Breast epithelium (tissue), 4 donors: ENCODE measurements at regions of chr18 and their contacts with region 1.

Region 1: GRCh38 chr18:64490207-64490606 is 341.3 kb upstream of the LINC00305 start:
- DNase-seq: no peak
- H3K4me3 ChIP-seq: no peak overlapping the region
- H3K27ac ChIP-seq: no peak overlapping the region
- H3K4me1 ChIP-seq: no peaks in the 10 kb centered on the region
- H3K27me3 ChIP-seq: no peaks in the 10 kb centered on the region
- CTCF ChIP-seq: no peak
- POLR2A ChIP-seq: no peak

Region 2: GRCh38 chr18:63299837-63300745 is 1190.1 kb before region 1 on chr18:
- intact Hi-C with region 1: no loop called
- DNase-seq: no peak
- H3K4me3 ChIP-seq: no peak overlapping the region
- H3K27ac ChIP-seq: peak overlapping the region; percentile 42 to 46
- H3K4me1 ChIP-seq: peaks cover 4 to 12% of the 10 kb centered on the region in 2 donors
- H3K27me3 ChIP-seq: no peaks in the 10 kb centered on the region
- CTCF ChIP-seq: no peak
- POLR2A ChIP-seq: no peak

Region 3: DNA sequence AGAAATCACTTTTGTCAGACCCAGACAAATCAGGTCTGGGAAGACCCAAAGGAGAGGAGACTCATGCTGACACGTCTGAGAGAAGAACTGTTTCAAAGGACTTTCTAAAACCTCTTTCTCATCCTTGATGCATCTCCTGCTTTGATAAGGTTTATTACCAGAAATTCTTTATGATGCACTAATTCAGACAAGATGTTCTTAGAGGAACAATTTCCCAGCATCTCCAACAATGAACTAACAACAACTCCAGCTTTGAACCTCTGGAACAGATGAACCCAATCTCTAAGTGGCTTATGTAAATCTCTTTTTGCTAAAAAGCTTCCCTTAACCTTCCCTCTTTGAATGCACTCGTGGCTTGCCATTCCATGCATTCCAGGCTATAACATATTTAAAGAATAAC is 803.3 kb before region 1 on chr18:
- intact Hi-C with region 1: loop called (anchors 5 kb)
- DNase-seq: no peak
- H3K4me3 ChIP-seq: no peak overlapping the region
- H3K27ac ChIP-seq: no peak overlapping the region
- H3K4me1 ChIP-seq: no peaks in the 10 kb centered on the region
- H3K27me3 ChIP-seq: no peaks in the 10 kb centered on the region
- CTCF ChIP-seq: no peak
- POLR2A ChIP-seq: no peak

Region 4: GRCh38 chr18:64528646-64529045 is 38.4 kb after region 1 on chr18:
- intact Hi-C with region 1: no loop called
- DNase-seq: no peak
- H3K4me3 ChIP-seq: no peak overlapping the region
- H3K27ac ChIP-seq: no peak overlapping the region
- H3K4me1 ChIP-seq: no peaks in the 10 kb centered on the region
- H3K27me3 ChIP-seq: no peaks in the 10 kb centered on the region
- CTCF ChIP-seq: no peak
- POLR2A ChIP-seq: no peak